SK-N-SH (cell line): ENCODE measurements at regions of chr3 and their contacts with region 1.

Region 1: DNA sequence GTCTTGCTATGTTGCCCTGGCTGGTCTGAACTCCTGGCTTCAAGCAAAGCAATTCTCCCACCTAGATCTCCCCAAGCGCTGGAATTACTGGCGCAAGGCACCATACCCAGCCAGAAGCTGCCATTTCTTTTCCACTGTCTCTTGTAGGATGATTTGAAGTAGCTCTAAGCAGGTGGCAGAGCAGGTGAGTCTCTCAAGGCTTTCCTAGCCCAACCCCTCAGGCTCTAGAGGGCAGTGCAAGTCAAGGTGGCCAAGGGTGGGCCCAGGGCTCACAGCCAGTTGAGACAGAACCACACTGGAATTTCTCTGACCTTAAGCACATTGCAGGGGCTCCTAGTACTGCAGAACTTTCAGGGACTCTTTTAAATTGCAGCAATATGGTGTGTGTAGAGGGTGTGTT is 15.6 kb upstream of the DAG1 start:
- DNase-seq: no peak
- H3K4me3 ChIP-seq: no peak overlapping the region
- H3K27ac ChIP-seq: no peak overlapping the region
- H3K4me1 ChIP-seq: peaks cover 0 to 7% of the 10 kb centered on the region in 2 experiments; a peak in 1 of 4 replicates
- H3K27me3 ChIP-seq: no peaks in the 10 kb centered on the region
- CTCF ChIP-seq: no peak
- EP300 ChIP-seq: no peak
- RAD21 ChIP-seq: peak; percentile 37

Region 2: DNA sequence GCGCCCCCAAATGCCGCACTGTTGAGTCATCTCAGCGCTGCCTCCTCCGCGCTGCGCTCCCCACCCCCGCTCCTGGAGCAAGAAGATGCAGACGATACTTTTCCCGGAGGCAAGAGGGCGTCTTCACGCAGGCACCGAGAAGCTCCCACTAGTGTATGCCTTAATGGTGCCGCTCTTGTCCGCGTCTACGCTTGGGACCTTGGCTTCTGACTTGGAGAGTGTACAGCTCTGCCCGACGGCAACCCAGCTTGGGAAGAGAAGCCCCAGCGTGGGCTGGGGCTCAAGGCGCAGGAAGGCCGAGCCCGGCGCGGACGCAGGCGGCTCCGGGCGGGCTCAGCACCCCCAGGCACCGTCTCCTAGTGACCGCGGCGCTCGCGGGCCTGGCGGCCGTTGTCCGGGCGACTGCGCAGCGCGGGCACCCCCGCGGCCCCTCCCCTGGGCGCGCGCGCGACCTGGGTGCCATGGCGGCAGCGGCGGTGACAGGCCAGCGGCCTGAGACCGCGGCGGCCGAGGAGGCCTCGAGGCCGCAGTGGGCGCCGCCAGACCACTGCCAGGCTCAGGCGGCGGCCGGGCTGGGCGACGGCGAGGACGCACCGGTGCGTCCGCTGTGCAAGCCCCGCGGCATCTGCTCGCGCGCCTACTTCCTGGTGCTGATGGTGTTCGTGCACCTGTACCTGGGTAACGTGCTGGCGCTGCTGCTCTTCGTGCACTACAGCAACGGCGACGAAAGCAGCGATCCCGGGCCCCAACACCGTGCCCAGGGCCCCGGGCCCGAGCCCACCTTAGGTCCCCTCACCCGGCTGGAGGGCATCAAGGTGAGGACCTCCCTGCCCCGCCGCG is 464.4 kb before region 1 on chr3 and contains the start of gene P4HTM:
- CTCF ChIA-PET with region 1: interaction called, 14 read pairs
- POLR2A ChIA-PET with region 1: no interaction called
- DNase-seq: no peak
- H3K4me3 ChIP-seq: peak within 1 kb of the TSS; percentile 35 to 63; a peak in 3 of 4 replicates
- H3K27ac ChIP-seq: peak within 1 kb of the TSS; percentile 12 to 88; a peak in 3 of 4 replicates
- H3K4me1 ChIP-seq: peaks cover 0 to 2% of the 10 kb centered on the region in 2 experiments; a peak in 1 of 4 replicates
- H3K27me3 ChIP-seq: no peaks in the 10 kb centered on the region
- CTCF ChIP-seq: peak; percentile 34
- EP300 ChIP-seq: peak in 1 of 2 experiments; percentile 26; a peak in 1 of 4 replicates
- RAD21 ChIP-seq: no peak
- polyA plus RNA-seq, gene P4HTM: 21.0 and 21.4 TPM in 2 replicates

Region 3: GRCh38 chr3:49276475-49277382 is 177.7 kb before region 1 on chr3 and contains the start of gene C3orf62:
- CTCF ChIA-PET with region 1: interaction called, 11 read pairs
- POLR2A ChIA-PET with region 1: no interaction called
- DNase-seq: peak; percentile 93
- H3K4me3 ChIP-seq: peak within 1 kb of the TSS; percentile 32; a peak in 3 of 4 replicates
- H3K27ac ChIP-seq: peak within 1 kb of the TSS; percentile 59 to 78; a peak in 3 of 4 replicates
- H3K4me1 ChIP-seq: peaks cover 0 to 3% of the 10 kb centered on the region in 2 experiments; a peak in 1 of 4 replicates
- H3K27me3 ChIP-seq: no peaks in the 10 kb centered on the region
- CTCF ChIP-seq: no peak
- EP300 ChIP-seq: no peak
- RAD21 ChIP-seq: no peak
- polyA plus RNA-seq, gene C3orf62: 4.2 and 5.8 TPM in 2 replicates

Region 4: GRCh38 chr3:49339945-49340800 is 114.3 kb before region 1 on chr3 and contains the start of gene USP4:
- CTCF ChIA-PET with region 1: interaction called, 22 read pairs
- POLR2A ChIA-PET with region 1: interaction called, 16 read pairs
- DNase-seq: peak; percentile 93
- H3K4me3 ChIP-seq: peak within 1 kb of the TSS; percentile 67 to 69
- H3K27ac ChIP-seq: peak within 1 kb of the TSS; percentile 77 to 93
- H3K4me1 ChIP-seq: peaks cover 5 to 11% of the 10 kb centered on the region in 2 experiments; a peak in 2 of 4 replicates
- H3K27me3 ChIP-seq: no peaks in the 10 kb centered on the region
- CTCF ChIP-seq: peak; percentile 30
- EP300 ChIP-seq: peak in 1 of 2 experiments; percentile 19; a peak in 1 of 4 replicates
- RAD21 ChIP-seq: peak; percentile 56
- polyA plus RNA-seq, gene USP4: 33.2 and 45.6 TPM in 2 replicates

Region 5: GRCh38 chr3:49434731-49435130 is 19.7 kb before region 1 on chr3:
- CTCF ChIA-PET with region 1: interaction called, 13 read pairs
- POLR2A ChIA-PET with region 1: no interaction called
- DNase-seq: no peak
- H3K4me3 ChIP-seq: no peak overlapping the region
- H3K27ac ChIP-seq: no peak overlapping the region
- H3K4me1 ChIP-seq: peaks cover 0 to 2% of the 10 kb centered on the region in 2 experiments; a peak in 1 of 4 replicates
- H3K27me3 ChIP-seq: no peaks in the 10 kb centered on the region
- CTCF ChIP-seq: no peak
- EP300 ChIP-seq: no peak
- RAD21 ChIP-seq: no peak

Region 6: DNA sequence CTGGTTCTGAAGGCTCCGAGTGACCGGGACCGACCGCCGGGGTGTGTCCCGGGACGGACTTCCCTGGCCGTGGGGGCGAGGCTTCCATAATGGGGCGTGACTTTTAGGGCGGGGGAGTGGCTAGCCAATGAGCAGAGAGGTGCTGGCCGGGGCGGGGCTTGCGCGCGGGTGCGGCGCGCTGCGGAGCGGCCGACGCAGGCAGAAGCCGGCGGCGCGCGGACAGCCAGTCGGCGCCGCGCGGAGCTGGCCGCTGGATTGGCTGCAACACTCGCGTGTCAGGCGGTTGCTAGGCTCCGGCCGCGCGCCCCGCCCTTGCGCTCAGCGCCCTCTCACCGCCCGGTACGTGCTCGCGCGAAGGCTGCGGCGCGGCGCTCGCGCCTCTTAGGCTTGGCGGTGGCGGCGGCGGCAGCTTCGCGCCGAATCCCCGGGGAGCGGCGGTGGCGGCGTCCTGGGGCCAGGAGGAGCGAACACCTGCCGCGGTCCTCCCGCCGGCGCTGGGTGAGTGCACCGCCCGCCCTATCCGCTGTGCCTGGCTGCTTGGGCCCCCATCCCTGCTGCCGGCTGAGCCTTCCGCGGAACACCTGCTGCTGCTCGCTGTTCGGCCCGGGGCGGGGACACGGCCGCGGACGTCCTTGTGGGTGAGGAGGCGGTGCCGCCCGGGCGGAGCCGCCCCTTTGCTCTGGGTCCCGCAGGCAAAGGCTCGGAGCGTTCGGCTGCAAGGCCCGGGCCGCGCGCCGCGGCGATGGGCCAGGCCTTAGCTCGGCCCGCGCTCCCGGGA is 15.7 kb after region 1 on chr3 and contains the start of gene DAG1:
- CTCF ChIA-PET with region 1: interaction called, 16 read pairs
- POLR2A ChIA-PET with region 1: no interaction called
- DNase-seq: peak; percentile 97
- H3K4me3 ChIP-seq: peak within 1 kb of the TSS; percentile 74 to 75
- H3K27ac ChIP-seq: peak within 1 kb of the TSS; percentile 97
- H3K4me1 ChIP-seq: peaks cover 5 to 20% of the 10 kb centered on the region in 2 experiments; a peak in 2 of 4 replicates
- H3K27me3 ChIP-seq: no peaks in the 10 kb centered on the region
- CTCF ChIP-seq: no peak
- EP300 ChIP-seq: no peak; a peak in 1 of 4 replicates
- RAD21 ChIP-seq: no peak
- polyA plus RNA-seq, gene DAG1: 50.2 and 54.4 TPM in 2 replicates